CD14-positive monocyte (primary cell): ENCODE measurements at regions of chr1 and their contacts with region 1.

Region 1: DNA sequence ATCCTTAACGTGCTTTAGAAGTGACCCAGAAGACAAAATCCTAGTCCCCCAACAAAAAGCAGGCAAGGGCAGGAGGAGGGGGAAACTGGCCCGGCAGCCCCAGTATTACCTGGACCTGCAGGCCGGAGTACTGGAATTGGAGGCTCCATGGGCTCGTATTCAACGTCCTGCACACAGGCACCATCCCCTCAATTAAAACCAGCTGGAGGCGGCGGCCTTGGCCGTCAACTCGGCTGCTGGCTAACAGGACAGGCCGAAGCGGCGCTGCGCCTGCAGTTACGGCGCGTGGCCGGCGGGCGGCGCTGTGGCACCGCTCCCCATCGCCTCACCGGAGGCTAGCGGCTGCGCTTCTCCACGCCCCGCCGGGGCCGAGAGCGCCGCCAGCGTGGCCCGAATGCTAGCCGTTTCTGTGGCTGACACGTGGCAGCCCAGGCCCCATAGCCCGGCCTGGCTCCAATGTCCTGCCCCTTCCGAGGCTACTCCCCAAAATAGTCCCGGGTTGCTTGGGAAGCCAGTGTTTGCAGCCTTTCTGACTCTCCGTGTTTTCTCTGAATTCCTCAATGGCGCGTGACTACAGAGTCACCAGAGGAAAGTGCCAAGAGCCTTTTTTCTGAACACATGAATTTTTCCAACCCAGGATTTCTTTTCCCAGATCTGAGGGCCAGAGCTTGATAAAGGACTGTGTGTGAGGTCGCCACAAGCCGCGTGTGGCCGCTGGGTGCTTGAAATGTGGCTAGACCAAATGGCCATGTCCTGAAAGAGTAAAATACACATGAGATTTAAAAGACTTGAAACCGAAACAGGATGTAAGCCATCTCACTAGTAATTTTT is 82.5 kb downstream of the HHIPL2 start:
- DNase-seq: peak; percentile 82 to 88 (median 85)
- H3K4me3 ChIP-seq: peak overlapping the region; percentile 49 to 76 (median 61)
- H3K4me3 Mint-ChIP-seq: peak overlapping the region; percentile 81 to 91
- H3K27ac ChIP-seq: peak overlapping the region; percentile 71 to 74
- H3K27ac Mint-ChIP-seq: peak overlapping the region; percentile 86 to 94 (median 90)
- H3K4me1 ChIP-seq: peaks cover 9 to 15% of the 10 kb centered on the region in 2 donors
- H3K4me1 Mint-ChIP-seq: peaks cover 14% of the 10 kb centered on the region
- H3K27me3 ChIP-seq: no peaks in the 10 kb centered on the region
- H3K27me3 Mint-ChIP-seq: peaks cover 0 to 11% (median 1%) of the 10 kb centered on the region in 3 donors
- CTCF ChIP-seq: peak; percentile 100

Region 2: DNA sequence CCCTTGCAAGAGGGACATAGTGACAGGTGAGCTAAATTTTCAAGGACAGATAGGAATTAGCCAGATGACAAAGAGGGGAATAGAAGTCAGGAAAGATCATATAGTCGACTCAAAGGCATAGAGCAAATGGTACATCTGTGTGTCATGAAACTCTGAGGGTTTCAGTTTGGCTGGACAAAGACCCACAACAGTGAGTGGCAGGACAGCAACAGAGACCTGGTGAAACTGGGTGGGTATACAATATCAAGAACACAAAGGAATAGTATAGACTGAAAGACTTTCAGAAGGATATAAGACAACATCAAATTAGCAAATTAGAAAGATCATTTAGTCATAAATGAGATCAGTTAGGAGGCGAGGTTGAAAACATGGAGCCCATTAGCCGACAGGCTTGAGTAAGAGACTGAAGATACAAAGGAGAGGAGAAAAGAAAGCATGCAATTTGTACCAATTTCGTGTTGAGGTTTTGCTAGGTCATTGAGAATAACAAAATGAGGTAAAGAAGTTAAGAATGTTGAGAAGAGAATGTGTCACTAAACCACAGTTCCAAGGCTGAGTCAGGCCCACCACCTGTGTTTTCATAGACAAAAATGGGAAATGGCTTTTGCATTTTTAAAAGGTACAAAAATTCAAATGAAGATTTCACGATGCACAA is 131.3 kb before region 1 on chr1:
- intact Hi-C with region 1: no loop called
- DNase-seq: no peak
- H3K4me3 ChIP-seq: no peak overlapping the region
- H3K4me3 Mint-ChIP-seq: no peak overlapping the region
- H3K27ac ChIP-seq: no peak overlapping the region
- H3K27ac Mint-ChIP-seq: no peak overlapping the region
- H3K4me1 ChIP-seq: no peaks in the 10 kb centered on the region
- H3K4me1 Mint-ChIP-seq: no peaks in the 10 kb centered on the region
- H3K27me3 ChIP-seq: no peaks in the 10 kb centered on the region
- H3K27me3 Mint-ChIP-seq: no peaks in the 10 kb centered on the region
- CTCF ChIP-seq: no peak

Region 3: DNA sequence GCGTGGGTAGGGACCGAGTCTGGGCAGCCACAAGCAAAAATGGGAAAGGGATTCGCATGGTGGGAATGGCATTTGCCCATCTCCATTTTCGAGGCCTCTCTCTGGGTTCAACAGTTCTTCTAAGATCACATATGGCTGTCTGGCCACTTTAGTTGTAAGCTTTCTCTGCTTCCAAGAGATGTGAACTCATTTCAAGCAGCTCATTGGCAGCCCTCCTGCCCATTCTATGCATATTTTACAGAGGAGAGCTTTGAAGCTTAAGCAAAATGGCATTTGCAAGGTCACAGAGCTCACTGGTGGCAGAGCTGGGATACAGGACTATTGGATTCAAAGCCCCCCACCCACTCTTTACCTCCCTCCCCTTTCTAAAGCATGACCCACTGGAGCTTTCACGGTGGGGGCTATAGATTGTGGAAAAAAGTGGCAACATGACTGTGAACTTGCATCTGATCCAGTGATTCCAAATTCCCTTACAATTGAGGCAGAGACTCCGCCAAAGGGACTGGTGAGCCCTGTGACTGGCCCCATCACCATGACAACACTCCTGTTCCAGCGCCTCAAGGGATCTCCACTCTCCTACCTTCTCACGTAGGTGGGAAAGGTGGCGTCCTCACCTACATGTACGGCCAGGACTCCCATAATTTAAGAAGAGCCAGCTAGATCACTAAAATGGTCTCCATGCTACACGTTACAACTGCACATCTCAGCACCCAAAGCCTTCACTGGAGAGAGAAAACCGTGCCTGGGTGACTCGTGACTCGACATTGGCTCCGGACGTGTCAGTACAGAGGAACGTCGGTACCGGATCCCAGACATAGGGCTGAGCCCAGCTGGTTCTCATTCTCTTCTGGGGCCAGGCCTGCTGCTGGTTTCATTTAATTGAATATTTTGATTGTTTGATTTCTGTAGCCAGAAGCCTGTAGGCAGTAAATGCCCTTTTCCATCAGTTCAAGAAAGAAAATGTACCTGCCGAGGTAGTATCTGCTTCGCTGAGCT is 10.9 kb before region 1 on chr1:
- intact Hi-C with region 1: no loop called
- DNase-seq: no peak
- H3K4me3 ChIP-seq: peak overlapping the region in 2 of 3 experiments; percentile 55 to 65
- H3K4me3 Mint-ChIP-seq: peak overlapping the region in 1 of 2 donors; percentile 52
- H3K27ac ChIP-seq: no peak overlapping the region
- H3K27ac Mint-ChIP-seq: peak overlapping the region in 1 of 7 donors; percentile 53
- H3K4me1 ChIP-seq: peaks cover 7 to 8% of the 10 kb centered on the region in 2 donors
- H3K4me1 Mint-ChIP-seq: peaks cover 11% of the 10 kb centered on the region
- H3K27me3 ChIP-seq: no peaks in the 10 kb centered on the region
- H3K27me3 Mint-ChIP-seq: peaks cover 0 to 6% (median 4%) of the 10 kb centered on the region in 3 donors
- CTCF ChIP-seq: no peak

Region 4: DNA sequence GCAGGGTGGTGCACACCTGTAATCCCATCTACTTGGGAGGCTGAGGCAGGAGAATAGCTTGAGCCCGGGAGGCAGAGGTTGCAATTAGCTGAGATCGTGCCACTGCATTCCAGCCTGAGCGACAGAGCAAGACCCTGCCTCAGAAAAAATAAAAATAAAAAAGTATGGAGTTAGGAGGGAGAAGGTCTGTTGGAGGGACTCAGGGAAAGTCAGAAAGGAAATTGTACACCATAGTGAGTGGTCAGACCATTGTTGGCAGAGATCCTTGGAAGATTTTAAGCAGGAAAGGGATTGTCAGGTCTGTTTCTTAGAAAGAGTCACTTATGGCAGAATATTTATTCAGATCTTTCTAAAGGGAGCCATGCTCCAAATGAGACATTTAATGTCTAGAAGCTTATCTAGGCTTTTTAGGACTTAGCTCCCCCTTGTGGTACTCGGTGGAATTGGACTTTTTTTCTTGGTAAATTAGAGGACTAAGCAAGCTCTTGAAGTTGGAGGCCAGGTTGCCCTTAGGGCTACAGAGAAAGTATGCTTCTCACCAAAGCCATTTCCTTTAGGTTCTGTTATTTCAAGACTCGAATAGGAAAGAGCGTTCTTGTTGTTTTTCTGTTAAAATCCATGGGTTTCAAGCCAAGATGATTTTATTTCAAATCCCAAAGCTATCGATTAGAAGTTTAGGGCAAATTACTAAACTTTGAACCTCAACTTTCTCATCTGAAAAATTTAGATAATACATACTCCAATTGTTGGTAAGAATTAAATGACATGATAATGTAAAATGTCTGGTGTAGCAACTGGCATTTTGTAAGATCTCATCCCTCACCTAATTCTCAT is 169.0 kb after region 1 on chr1:
- intact Hi-C with region 1: loop called (anchors 2 to 5 kb)
- DNase-seq: peak; percentile 68 to 88 (median 73)
- H3K4me3 ChIP-seq: no peak overlapping the region
- H3K4me3 Mint-ChIP-seq: no peak overlapping the region
- H3K27ac ChIP-seq: no peak overlapping the region
- H3K27ac Mint-ChIP-seq: no peak overlapping the region
- H3K4me1 ChIP-seq: no peaks in the 10 kb centered on the region
- H3K4me1 Mint-ChIP-seq: no peaks in the 10 kb centered on the region
- H3K27me3 ChIP-seq: no peaks in the 10 kb centered on the region
- H3K27me3 Mint-ChIP-seq: no peaks in the 10 kb centered on the region
- CTCF ChIP-seq: peak; percentile 94

Region 5: GRCh38 chr1:222713091-222713961 is 247.9 kb after region 1 on chr1:
- intact Hi-C with region 1: loop called in 1 of 2 experiments (anchors 10 kb)
- DNase-seq: peak; percentile 90 to 91 (median 90)
- H3K4me3 ChIP-seq: peak overlapping the region; percentile 97 to 99 (median 98)
- H3K4me3 Mint-ChIP-seq: peak overlapping the region; percentile 93 to 97
- H3K27ac ChIP-seq: peak overlapping the region; percentile 98 to 100
- H3K27ac Mint-ChIP-seq: peak overlapping the region; percentile 99 to 100 (median 100)
- H3K4me1 ChIP-seq: peaks cover 16 to 33% of the 10 kb centered on the region in 2 donors
- H3K4me1 Mint-ChIP-seq: peaks cover 40% of the 10 kb centered on the region
- H3K27me3 ChIP-seq: no peaks in the 10 kb centered on the region
- H3K27me3 Mint-ChIP-seq: no peaks in the 10 kb centered on the region
- CTCF ChIP-seq: no peak

Region 6: GRCh38 chr1:223081181-223081994 is 616.0 kb after region 1 on chr1:
- intact Hi-C with region 1: loop called in 1 of 2 experiments (anchors 10 kb)
- DNase-seq: peak; percentile 37 to 55 (median 39)
- H3K4me3 ChIP-seq: peak overlapping the region; percentile 3 to 66 (median 32)
- H3K4me3 Mint-ChIP-seq: peak overlapping the region; percentile 68 to 77
- H3K27ac ChIP-seq: no peak overlapping the region
- H3K27ac Mint-ChIP-seq: peak overlapping the region in 1 of 7 donors; percentile 40
- H3K4me1 ChIP-seq: peaks cover 3 to 6% of the 10 kb centered on the region in 2 donors
- H3K4me1 Mint-ChIP-seq: peaks cover 3% of the 10 kb centered on the region
- H3K27me3 ChIP-seq: no peaks in the 10 kb centered on the region
- H3K27me3 Mint-ChIP-seq: peaks cover 3 to 10% (median 3%) of the 10 kb centered on the region in 3 donors
- CTCF ChIP-seq: peak; percentile 83